ENCODE measurements at regions of chr13 and their contacts with region 1.

Region 1: GRCh38 chr13:26062844-26063444 is 11.1 kb upstream of the SHISA2 start:
- DNase-seq: no peak
- ATAC-seq: peak; percentile 71

Region 2: GRCh38 chr13:25574437-25575411 is 488.2 kb before region 1 on chr13:
- intact Hi-C with region 1: loop called (anchors 5 to 10 kb)
- DNase-seq: peak; percentile 45 to 75
- ATAC-seq: peak; percentile 94

Region 3: GRCh38 chr13:26186118-26186870 is 123.3 kb after region 1 on chr13:
- intact Hi-C with region 1: no loop called
- DNase-seq: peak; percentile 91 to 94
- ATAC-seq: peak; percentile 97